Mammary epithelial cell (primary cell): ENCODE measurements at regions of chr10 and their contacts with region 1.

Region 1: GRCh38 chr10:117537436-117537903 is 5.1 kb upstream of the EMX2 start:
- DNase-seq: no peak
- H3K4me3 ChIP-seq: no peak overlapping the region
- H3K27ac ChIP-seq: no peak overlapping the region
- H3K4me1 ChIP-seq: peaks cover 12% of the 10 kb centered on the region
- H3K27me3 ChIP-seq: peaks cover 72% of the 10 kb centered on the region
- CTCF ChIP-seq: peak; percentile 44 to 55

Region 2: GRCh38 chr10:117431160-117431559 is 106.3 kb before region 1 on chr10:
- CTCF ChIA-PET with region 1: no interaction called
- dilution Hi-C with region 1: no loop called
- in situ Hi-C with region 1: no loop called
- intact Hi-C with region 1: loop called (anchors 2 kb)
- DNase-seq: peak; percentile 60
- H3K4me3 ChIP-seq: no peak overlapping the region
- H3K27ac ChIP-seq: no peak overlapping the region
- H3K4me1 ChIP-seq: no peaks in the 10 kb centered on the region
- H3K27me3 ChIP-seq: no peaks in the 10 kb centered on the region
- CTCF ChIP-seq: peak; percentile 39 to 57

Region 3: DNA sequence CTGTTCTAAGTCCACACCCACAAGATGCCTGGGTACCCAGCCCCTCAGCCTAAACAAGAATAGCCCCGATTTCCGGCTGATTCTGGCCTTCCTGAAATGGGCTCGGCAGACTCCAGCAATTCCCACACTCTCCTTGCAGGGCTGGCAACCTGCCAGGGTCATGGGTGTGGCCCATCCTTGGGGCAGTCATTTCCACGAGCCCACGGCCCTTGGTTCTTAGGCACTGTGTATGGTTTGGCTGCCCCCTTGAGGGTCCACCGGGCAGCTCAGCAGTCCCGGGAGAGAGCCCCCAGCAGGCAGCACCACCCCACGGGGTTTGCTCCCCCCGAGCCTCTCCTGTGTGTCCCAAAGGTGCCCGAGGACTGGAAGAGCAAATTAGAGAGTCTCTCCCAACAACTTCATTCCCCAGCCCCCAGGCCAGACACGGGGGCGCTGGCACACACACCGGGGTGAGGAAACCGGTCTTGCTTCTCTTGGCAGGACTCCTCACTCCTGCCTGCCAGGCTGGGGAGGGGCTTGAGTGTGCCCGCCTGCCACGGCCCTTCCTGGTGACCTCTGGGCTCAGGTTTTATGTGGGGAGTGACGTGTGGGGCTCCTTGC is 147.3 kb after region 1 on chr10:
- CTCF ChIA-PET with region 1: no interaction called
- dilution Hi-C with region 1: no loop called
- in situ Hi-C with region 1: no loop called
- intact Hi-C with region 1: loop called (anchors 5 kb)
- DNase-seq: no peak
- H3K4me3 ChIP-seq: no peak overlapping the region
- H3K27ac ChIP-seq: no peak overlapping the region
- H3K4me1 ChIP-seq: peaks cover 8% of the 10 kb centered on the region
- H3K27me3 ChIP-seq: no peaks in the 10 kb centered on the region
- CTCF ChIP-seq: peak in 1 of 2 donors; percentile 36

Region 4: GRCh38 chr10:117752109-117752508 is 214.6 kb after region 1 on chr10:
- CTCF ChIA-PET with region 1: no interaction called
- dilution Hi-C with region 1: no loop called
- in situ Hi-C with region 1: no loop called
- intact Hi-C with region 1: loop called (anchors 2 kb)
- DNase-seq: no peak
- H3K4me3 ChIP-seq: no peak overlapping the region
- H3K27ac ChIP-seq: no peak overlapping the region
- H3K4me1 ChIP-seq: no peaks in the 10 kb centered on the region
- H3K27me3 ChIP-seq: peaks cover 2% of the 10 kb centered on the region
- CTCF ChIP-seq: peak in 1 of 2 donors; percentile 21

Region 5: DNA sequence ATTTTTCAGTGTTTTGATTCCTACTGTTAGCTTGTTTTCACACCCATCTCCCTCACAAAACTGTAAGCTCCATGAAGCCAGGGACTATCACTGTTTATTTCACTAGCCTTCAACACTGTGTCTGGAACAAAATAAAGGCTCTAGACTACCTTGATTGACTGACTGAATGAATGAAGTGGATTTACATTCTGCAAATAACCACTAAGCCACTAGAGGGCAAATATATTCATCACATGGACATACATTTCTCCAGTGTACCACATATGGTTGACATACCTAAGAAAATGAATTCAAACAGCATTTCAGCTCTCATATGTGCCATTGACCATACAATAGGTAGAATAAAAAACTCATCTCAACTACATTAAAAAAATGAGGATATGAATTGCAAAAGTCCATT is 323.4 kb after region 1 on chr10:
- CTCF ChIA-PET with region 1: no interaction called
- dilution Hi-C with region 1: no loop called
- in situ Hi-C with region 1: no loop called
- intact Hi-C with region 1: loop called (anchors 5 kb)
- DNase-seq: no peak
- H3K4me3 ChIP-seq: no peak overlapping the region
- H3K27ac ChIP-seq: no peak overlapping the region
- H3K4me1 ChIP-seq: no peaks in the 10 kb centered on the region
- H3K27me3 ChIP-seq: no peaks in the 10 kb centered on the region
- CTCF ChIP-seq: peak; percentile 41 to 56